ENCODE measurements at regions of chr6 and their contacts with region 1.

Region 1: GRCh38 chr6:130885392-130886192 is 58.4 kb downstream of the SMLR1 start:
- DNase-seq: peak; percentile 75 to 83 (median 77)
- ATAC-seq: peak; percentile 93
- H3K4me3 ChIP-seq: no peak overlapping the region
- H3K27ac ChIP-seq: no peak overlapping the region
- H3K4me1 ChIP-seq: no peaks in the 10 kb centered on the region
- H3K27me3 ChIP-seq: no peaks in the 10 kb centered on the region
- CTCF ChIP-seq: peak; percentile 67 to 96 (median 92)
- POLR2A ChIP-seq: no peak

Region 2: GRCh38 chr6:130843575-130844320 is 41.8 kb before region 1 on chr6:
- intact Hi-C with region 1: no loop called
- DNase-seq: peak in 1 of 4 donors; percentile 16
- ATAC-seq: peak; percentile 80
- H3K4me3 ChIP-seq: no peak overlapping the region
- H3K27ac ChIP-seq: no peak overlapping the region
- H3K4me1 ChIP-seq: no peaks in the 10 kb centered on the region
- H3K27me3 ChIP-seq: no peaks in the 10 kb centered on the region
- CTCF ChIP-seq: peak; percentile 7 to 82 (median 67)
- POLR2A ChIP-seq: no peak

Region 3: DNA sequence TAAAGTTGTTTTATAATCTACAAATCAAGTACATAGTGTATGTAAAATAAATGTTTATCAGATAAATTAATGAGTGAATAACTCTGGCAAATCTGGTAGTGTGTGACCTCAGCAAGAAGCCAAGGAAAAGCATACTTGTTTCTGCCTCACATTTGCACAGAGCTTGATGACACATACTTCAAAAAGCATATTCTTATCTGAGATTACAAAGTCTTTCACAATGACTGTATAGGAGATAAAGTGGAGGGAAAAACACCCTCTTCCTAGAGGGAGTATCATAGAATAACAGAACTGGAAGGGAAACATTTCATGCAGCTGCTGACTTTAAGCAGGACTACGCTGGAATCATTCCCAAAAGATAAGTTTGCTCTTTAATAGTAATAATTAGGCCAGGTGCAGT is 221.6 kb after region 1 on chr6:
- intact Hi-C with region 1: loop called (anchors 5 kb)
- DNase-seq: no peak
- ATAC-seq: peak; percentile 48
- H3K4me3 ChIP-seq: no peak overlapping the region
- H3K27ac ChIP-seq: no peak overlapping the region
- H3K4me1 ChIP-seq: peaks cover 7% of the 10 kb centered on the region
- H3K27me3 ChIP-seq: no peaks in the 10 kb centered on the region
- CTCF ChIP-seq: no peak
- POLR2A ChIP-seq: no peak

Region 4: GRCh38 chr6:131116749-131117360 is 231.3 kb after region 1 on chr6:
- intact Hi-C with region 1: loop called (anchors 5 kb)
- DNase-seq: peak in 1 of 4 donors; percentile 17
- ATAC-seq: peak; percentile 59
- H3K4me3 ChIP-seq: no peak overlapping the region
- H3K27ac ChIP-seq: no peak overlapping the region
- H3K4me1 ChIP-seq: no peaks in the 10 kb centered on the region
- H3K27me3 ChIP-seq: no peaks in the 10 kb centered on the region
- CTCF ChIP-seq: peak in 6 of 7 experiments; percentile 35 to 74 (median 64)
- POLR2A ChIP-seq: no peak

Region 5: DNA sequence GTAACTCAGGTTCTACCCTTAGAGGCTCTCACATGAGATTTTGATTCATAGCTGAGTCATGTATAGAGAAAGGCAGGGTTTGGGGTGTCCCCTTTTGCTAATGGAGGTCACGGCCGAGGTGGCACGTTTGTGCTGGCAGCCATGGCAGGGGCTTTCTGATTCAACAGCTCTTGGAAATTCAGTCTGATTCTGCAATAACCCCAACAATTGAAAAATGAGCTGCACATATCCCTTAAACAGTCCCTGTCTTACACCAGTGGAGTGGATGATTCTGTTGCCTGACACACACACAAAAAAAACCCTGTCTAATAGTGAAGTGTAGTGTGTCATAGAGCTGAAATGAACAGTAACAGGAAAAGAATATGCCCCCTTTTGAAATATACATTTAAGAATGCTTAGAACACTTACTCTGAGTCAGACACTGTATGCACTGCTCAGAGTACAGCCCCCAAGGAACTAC is 647.0 kb after region 1 on chr6:
- intact Hi-C with region 1: loop called (anchors 10 kb)
- DNase-seq: no peak
- ATAC-seq: no peak
- H3K4me3 ChIP-seq: no peak overlapping the region
- H3K27ac ChIP-seq: no peak overlapping the region
- H3K4me1 ChIP-seq: no peaks in the 10 kb centered on the region
- H3K27me3 ChIP-seq: no peaks in the 10 kb centered on the region
- CTCF ChIP-seq: no peak
- POLR2A ChIP-seq: no peak